HepG2 (cell line): ENCODE measurements at regions of chr10 and their contacts with region 1.

Region 1: DNA sequence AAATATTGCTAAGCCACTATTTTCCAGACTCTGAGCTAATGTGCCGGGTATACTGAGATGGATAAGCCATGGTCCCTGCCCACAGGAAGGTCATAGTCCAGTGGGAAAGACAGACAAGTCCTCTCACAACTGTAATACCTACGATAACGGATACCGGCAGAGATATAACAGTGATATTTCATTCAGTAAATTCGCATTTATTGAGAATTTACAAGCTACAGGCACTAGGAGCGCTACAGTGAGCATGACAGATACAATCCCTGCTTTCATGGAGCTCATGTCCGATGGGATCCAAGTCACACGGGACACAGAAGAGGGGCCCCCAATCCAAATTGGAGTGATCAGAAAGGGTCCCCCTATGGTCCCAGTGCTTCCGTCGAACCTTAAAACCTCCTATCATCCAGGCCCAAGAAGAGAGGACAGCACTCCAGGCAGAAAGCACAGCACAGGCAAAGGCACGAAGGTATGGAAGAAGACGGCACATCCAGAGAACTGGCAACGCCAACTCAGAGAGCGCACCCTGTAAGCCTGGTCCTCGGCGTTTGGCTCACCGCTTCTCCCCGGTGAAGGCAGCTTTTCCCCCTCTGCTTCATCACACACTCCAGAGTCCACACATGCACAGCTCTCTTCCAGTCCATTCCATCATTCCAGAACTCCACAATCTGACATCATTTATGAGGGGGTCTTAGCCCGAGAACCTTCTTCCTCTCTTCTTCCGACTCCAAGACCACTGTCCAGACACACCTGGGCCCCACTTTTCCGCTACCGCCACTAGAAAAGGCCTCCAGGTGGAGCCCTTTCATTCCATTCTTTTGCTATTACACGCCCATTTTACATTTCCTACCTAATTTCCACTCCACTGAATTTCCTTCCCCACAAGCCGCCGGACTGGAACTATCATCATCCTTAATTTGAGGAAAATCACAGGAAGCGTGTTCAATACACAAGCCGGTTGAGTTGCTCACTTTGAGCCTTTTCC is 47.9 kb upstream of the NKX2-3 start:
- DNase-seq: peak; percentile 2
- ATAC-seq: peak; percentile 72
- H3K4me3 ChIP-seq: no peak overlapping the region
- H3K27ac ChIP-seq: no peak overlapping the region
- H3K4me1 ChIP-seq: peaks cover 5% of the 10 kb centered on the region; the same call in 1 of the 2 replicates
- H3K27me3 ChIP-seq: peaks cover 0 to 32% of the 10 kb centered on the region in 2 experiments; a peak in 2 of 5 replicates
- CTCF ChIP-seq: no peak; the same call in 1 of the 2 replicates
- EP300 ChIP-seq: no peak
- POLR2A ChIP-seq: no peak
- RAD21 ChIP-seq: no peak

Region 2: GRCh38 chr10:99548041-99548530 is 63.2 kb after region 1 on chr10:
- CTCF ChIA-PET with region 1: no interaction called
- POLR2A ChIA-PET with region 1: no interaction called
- in situ Hi-C with region 1: loop called (anchors 5 kb)
- intact Hi-C with region 1: loop called (anchors 2 kb)
- DNase-seq: peak; percentile 32
- ATAC-seq: peak; percentile 96
- H3K4me3 ChIP-seq: no peak overlapping the region
- H3K27ac ChIP-seq: no peak overlapping the region
- H3K4me1 ChIP-seq: no peaks in the 10 kb centered on the region
- H3K27me3 ChIP-seq: peaks cover 2 to 6% of the 10 kb centered on the region in 2 experiments; a peak in 3 of 5 replicates
- CTCF ChIP-seq: peak; percentile 69
- EP300 ChIP-seq: no peak
- POLR2A ChIP-seq: no peak
- RAD21 ChIP-seq: no peak